Activated CD4-positive, alpha-beta memory T cell treated with anti-CD3 and anti-CD28 coated beads, Interleukin-2, amount 10 ng/mL, durations not matched to agents 7 days and 5 days (primary cell): ENCODE measurements at regions of chr11 and their contacts with region 1.

Region 1: GRCh38 chr11:12235947-12236743 is 125.8 kb downstream of the MICAL2 start:
- DNase-seq: peak; percentile 74
- H3K4me3 Mint-ChIP-seq: peak overlapping the region; percentile 33
- H3K27ac Mint-ChIP-seq: peak overlapping the region; percentile 95
- H3K4me1 Mint-ChIP-seq: peaks cover 36% of the 10 kb centered on the region
- H3K27me3 Mint-ChIP-seq: no peaks in the 10 kb centered on the region

Region 2: DNA sequence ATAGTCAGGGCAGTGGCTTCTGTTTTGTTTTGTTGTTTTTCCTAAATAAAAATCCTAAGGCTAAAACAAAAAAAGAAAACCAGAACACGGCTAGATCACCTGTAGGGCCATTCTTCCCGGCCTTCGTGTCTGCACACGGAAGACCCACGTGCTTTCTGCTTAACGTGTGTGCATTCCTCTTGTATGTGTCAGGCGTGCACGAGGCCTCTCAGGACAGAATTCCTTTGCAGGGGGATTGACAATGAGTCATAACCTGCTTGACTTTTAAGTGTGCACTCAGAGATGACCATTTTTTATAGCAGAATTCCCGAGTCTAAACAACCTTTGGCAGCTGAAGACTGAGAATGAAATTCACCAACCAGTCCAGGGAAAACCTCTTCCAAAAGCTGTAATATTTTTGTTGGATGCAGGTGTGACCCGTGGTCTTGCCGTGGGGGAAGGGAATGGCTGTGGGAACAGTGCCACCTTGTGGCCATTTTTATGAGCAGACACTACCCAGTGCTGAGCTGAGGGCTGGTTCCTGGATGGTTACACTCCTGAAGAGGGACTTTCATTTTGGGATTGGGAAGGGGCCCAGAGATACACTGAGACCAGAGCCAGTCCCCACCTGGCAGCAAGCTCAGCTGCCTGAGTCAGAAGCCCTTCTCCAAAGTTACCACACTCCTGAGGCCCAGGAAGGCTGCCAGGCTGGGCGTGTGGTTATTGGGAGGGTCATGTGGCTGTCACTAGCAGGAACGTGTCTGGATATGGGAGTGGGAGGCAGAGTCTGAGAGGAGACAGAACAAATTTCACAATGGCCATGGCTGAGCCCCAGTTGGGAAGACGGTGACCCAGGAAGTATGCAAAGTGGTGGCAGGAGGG is 192.0 kb before region 1 on chr11:
- CTCF ChIA-PET with region 1: interaction called, 97 read pairs
- POLR2A ChIA-PET with region 1: interaction called, 6 read pairs
- DNase-seq: peak; percentile 72
- H3K4me3 Mint-ChIP-seq: no peak overlapping the region
- H3K27ac Mint-ChIP-seq: no peak overlapping the region
- H3K4me1 Mint-ChIP-seq: peaks cover 9% of the 10 kb centered on the region
- H3K27me3 Mint-ChIP-seq: peaks cover 4% of the 10 kb centered on the region

Region 3: GRCh38 chr11:12110201-12110713 is 125.9 kb before region 1 on chr11 and contains the start of gene MICAL2:
- CTCF ChIA-PET with region 1: interaction called, 6 read pairs
- POLR2A ChIA-PET with region 1: interaction called, 12 read pairs
- DNase-seq: peak; percentile 89
- H3K4me3 Mint-ChIP-seq: peak within 1 kb of the TSS; percentile 82
- H3K27ac Mint-ChIP-seq: peak within 1 kb of the TSS; percentile 97
- H3K4me1 Mint-ChIP-seq: peaks cover 63% of the 10 kb centered on the region
- H3K27me3 Mint-ChIP-seq: no peaks in the 10 kb centered on the region
- total RNA-seq, gene MICAL2: 135 to 143 TPM

Region 4: GRCh38 chr11:12159351-12160099 is 76.6 kb before region 1 on chr11:
- CTCF ChIA-PET with region 1: interaction called, 19 read pairs
- POLR2A ChIA-PET with region 1: interaction called, 4 read pairs
- DNase-seq: no peak
- H3K4me3 Mint-ChIP-seq: no peak overlapping the region
- H3K27ac Mint-ChIP-seq: peak overlapping the region; percentile 33
- H3K4me1 Mint-ChIP-seq: peaks cover 73% of the 10 kb centered on the region
- H3K27me3 Mint-ChIP-seq: no peaks in the 10 kb centered on the region

Region 5: GRCh38 chr11:12200279-12201010 is 35.7 kb before region 1 on chr11:
- CTCF ChIA-PET with region 1: interaction called, 38 read pairs
- POLR2A ChIA-PET with region 1: interaction called, 54 read pairs
- DNase-seq: no peak
- H3K4me3 Mint-ChIP-seq: no peak overlapping the region
- H3K27ac Mint-ChIP-seq: peak overlapping the region; percentile 98
- H3K4me1 Mint-ChIP-seq: peaks cover 75% of the 10 kb centered on the region
- H3K27me3 Mint-ChIP-seq: no peaks in the 10 kb centered on the region

Region 6: DNA sequence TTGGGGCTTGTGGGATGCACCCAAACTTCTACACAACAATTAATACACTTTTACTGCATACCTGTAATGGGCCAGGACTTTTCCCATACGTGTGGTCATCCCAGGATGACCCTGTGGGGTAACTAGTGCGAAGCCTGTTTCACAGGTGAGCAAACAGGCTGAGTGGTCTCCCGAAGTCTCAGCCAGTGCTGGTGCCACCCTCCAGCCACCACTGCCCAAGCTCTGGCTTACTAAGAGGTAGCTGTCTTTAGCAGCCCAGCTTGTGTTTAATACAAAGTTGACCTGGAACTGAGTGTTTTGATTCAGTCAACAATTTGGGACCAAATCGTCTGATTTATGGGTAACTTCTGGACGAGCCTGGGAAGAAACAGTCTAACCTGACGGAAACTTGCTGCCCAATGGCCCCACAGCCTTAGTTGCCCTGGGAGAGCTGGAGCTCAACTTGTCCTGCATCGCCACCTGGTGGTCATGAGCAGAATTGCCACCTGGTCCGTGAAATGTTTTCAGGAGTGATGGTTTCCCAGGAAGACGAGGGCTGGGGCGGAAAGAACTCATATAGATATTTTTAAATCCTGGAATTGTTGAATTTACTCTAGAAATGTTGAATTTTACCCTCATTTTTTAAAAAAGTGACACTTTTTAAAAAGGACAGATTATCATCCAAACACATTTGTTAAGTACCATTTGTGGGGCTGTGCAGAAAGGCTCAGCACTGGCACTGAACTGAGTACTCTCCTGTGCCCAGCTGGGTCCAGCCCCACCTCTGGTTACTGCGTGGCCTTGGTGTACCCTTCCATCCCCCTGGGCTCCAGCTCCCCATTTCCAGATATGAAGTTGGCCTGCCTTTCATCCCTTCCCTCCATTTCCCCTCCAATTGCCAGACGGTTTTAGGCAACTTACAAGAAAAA is 45.7 kb after region 1 on chr11:
- CTCF ChIA-PET with region 1: interaction called, 25 read pairs
- POLR2A ChIA-PET with region 1: no interaction called
- DNase-seq: peak; percentile 81
- H3K4me3 Mint-ChIP-seq: no peak overlapping the region
- H3K27ac Mint-ChIP-seq: no peak overlapping the region
- H3K4me1 Mint-ChIP-seq: peaks cover 2% of the 10 kb centered on the region
- H3K27me3 Mint-ChIP-seq: no peaks in the 10 kb centered on the region